ENCODE measurements at regions of chr3 and their contacts with region 1.

Region 1: GRCh38 chr3:16290007-16290826 is 25.2 kb downstream of the OXNAD1 start:
- DNase-seq: peak; percentile 89
- H3K4me3 Mint-ChIP-seq: peak overlapping the region; percentile 93
- H3K27ac Mint-ChIP-seq: peak overlapping the region; percentile 92
- H3K4me1 Mint-ChIP-seq: peaks cover 66% of the 10 kb centered on the region
- H3K27me3 Mint-ChIP-seq: no peaks in the 10 kb centered on the region

Region 2: DNA sequence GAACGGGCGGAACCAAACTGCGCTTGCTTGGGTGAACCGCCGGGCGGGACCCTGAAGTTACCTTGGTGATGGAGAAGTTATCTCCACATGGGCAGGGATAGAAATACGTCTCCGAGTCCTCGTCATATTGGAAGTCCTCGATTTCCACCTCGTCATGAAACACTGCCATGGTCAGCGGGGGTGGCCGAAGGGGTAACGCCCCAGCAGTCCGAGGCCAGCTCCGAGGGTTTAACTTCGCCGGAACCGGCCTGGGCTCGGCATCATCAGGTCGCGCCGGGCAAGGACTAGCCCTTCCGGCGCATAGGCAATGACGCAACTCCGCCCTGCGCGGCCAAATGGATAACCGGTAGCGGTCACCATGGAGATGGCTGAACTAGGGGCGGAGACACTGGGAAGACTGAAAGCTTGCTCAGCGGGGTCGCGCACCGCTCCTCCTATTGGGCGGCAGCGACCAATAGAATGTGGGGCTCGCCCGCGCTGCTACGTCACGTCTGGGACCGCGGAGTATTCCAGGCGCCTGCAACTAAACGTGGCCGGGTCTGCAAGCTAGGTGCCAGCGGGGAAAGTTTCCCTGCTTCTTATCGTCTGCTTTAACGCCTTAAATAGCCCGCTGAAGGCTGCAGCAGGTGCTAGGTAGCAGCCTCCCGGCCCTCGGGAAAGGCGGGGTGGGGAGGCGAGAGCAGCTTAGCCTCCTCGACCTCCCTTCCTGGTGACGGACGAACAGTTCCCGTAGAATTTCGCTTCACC is 25.3 kb before region 1 on chr3 and contains the starts of genes DPH3 and OXNAD1:
- intact Hi-C with region 1: loop called (anchors 1 kb)
- DNase-seq: peak; percentile 100
- H3K4me3 Mint-ChIP-seq: peak within 1 kb of the TSS; percentile 97
- H3K27ac Mint-ChIP-seq: peak within 1 kb of the TSS; percentile 98
- H3K4me1 Mint-ChIP-seq: peaks cover 33% of the 10 kb centered on the region
- H3K27me3 Mint-ChIP-seq: no peaks in the 10 kb centered on the region
- total RNA-seq, gene DPH3: 27.6 and 30.1 TPM in 2 replicates
- total RNA-seq, gene OXNAD1: 27.1 and 29.8 TPM in 2 replicates

Region 3: DNA sequence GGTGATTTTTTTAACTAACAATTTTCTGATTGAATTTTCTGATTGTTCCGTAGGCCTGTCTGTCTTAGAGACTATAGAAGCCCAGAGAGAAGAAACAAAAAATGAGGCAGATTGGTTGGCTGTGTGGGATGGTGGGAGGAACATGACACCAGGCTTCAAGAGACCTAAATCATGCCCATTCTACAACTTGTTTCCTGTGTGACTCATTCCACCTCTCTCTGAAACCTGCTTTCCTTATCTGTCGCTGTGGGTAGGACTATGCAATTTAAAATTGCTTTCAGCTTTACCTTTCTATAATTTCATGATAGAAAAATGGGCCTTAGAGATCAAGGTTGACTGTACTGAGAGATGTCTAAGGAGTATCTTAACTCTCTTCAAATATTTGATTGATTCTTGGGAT is 19.3 kb after region 1 on chr3:
- intact Hi-C with region 1: loop called (anchors 1 kb)
- DNase-seq: peak; percentile 87
- H3K4me3 Mint-ChIP-seq: peak overlapping the region; percentile 61
- H3K27ac Mint-ChIP-seq: peak overlapping the region; percentile 89
- H3K4me1 Mint-ChIP-seq: peaks cover 80% of the 10 kb centered on the region
- H3K27me3 Mint-ChIP-seq: no peaks in the 10 kb centered on the region

Region 4: DNA sequence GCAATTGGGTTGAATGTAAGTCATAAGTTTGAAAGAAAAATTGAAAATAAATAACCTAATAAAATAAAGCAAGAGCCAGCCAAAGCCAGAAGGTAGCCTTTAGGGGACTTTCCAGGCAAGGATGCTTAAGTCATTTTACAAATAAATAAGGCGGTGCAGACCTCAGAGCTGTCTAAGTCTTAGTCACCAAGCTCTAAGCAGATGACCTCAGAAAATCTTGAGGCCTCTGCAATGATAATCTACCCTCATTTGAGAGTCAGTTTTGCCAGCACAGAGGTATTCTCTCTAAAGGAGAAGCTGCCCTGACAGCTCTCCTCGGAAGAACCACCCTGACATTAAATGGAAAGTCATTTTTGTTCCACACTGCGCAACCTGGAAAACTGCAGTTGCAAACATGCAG is 88.7 kb after region 1 on chr3:
- intact Hi-C with region 1: loop called (anchors 2 kb)
- DNase-seq: peak; percentile 72
- H3K4me3 Mint-ChIP-seq: peak overlapping the region; percentile 49
- H3K27ac Mint-ChIP-seq: peak overlapping the region; percentile 90
- H3K4me1 Mint-ChIP-seq: peaks cover 67% of the 10 kb centered on the region
- H3K27me3 Mint-ChIP-seq: no peaks in the 10 kb centered on the region

Region 5: DNA sequence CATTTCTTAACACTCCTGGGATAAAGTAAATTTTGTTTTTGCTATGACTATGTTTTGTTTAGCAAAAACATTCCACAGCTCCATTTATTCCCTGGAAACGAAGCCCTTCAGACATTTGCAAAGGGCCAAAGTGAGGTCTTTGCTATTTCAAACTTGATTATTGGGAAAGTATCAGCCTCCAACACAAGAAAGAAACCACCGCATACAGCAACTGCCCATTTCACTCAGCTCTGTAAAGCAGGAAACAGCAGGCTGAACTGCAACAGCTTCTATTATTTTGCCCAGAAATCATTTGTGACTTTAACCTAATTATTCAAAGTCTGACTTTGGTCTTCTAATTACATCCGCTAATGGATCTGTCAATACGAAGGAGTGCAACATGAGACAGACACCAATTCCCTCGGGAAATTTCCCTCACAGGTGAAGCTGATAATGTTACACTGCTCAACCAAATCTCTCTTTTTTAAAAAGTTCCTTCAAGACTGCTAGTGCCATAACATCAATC is 151.2 kb after region 1 on chr3:
- intact Hi-C with region 1: no loop called
- DNase-seq: no peak
- H3K4me3 Mint-ChIP-seq: no peak overlapping the region
- H3K27ac Mint-ChIP-seq: no peak overlapping the region
- H3K4me1 Mint-ChIP-seq: peaks cover 27% of the 10 kb centered on the region
- H3K27me3 Mint-ChIP-seq: no peaks in the 10 kb centered on the region

Region 6: GRCh38 chr3:16550676-16551341 is 260.6 kb after region 1 on chr3:
- intact Hi-C with region 1: loop called (anchors 1 kb)
- DNase-seq: peak; percentile 94
- H3K4me3 Mint-ChIP-seq: no peak overlapping the region
- H3K27ac Mint-ChIP-seq: peak overlapping the region; percentile 71
- H3K4me1 Mint-ChIP-seq: peaks cover 11% of the 10 kb centered on the region
- H3K27me3 Mint-ChIP-seq: peaks cover 13% of the 10 kb centered on the region

Region 7: GRCh38 chr3:16993227-16993626 is 703.0 kb after region 1 on chr3:
- intact Hi-C with region 1: no loop called
- DNase-seq: no peak
- H3K4me3 Mint-ChIP-seq: no peak overlapping the region
- H3K27ac Mint-ChIP-seq: no peak overlapping the region
- H3K4me1 Mint-ChIP-seq: peaks cover 20% of the 10 kb centered on the region
- H3K27me3 Mint-ChIP-seq: no peaks in the 10 kb centered on the region

Region 8: DNA sequence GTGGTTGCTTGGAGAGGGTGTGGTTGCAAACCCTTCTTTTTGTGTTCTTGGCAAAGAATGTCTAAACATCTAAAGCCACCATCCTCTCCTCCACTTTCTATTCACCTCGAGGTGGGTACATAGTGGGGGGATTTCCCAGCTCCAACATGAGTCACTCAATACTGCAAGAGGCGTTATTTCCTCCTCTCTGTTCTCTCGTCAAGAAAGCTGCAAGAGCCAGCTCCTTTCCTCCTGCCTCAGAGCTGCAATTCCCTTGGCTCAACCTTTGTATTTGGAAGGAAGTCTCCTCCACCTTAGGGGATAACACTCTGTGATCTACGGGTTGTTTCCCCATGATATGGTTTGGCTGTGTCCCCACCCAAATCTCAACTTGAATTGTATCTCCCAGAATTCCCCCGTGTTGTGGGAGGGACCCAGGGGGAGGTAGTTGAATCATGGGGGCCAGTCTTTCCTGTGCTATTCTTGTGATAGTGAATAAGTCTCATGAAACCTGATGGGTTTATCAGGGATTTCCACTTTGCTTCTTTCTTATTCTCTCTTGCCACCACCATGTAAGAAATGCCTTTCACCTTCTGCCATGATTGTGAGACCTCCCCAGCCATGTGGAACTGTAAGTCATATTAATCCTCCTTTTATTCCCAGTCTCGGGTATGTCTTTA is 732.9 kb after region 1 on chr3:
- intact Hi-C with region 1: loop called (anchors 10 kb)
- DNase-seq: peak; percentile 87
- H3K4me3 Mint-ChIP-seq: peak overlapping the region; percentile 61
- H3K27ac Mint-ChIP-seq: peak overlapping the region; percentile 88
- H3K4me1 Mint-ChIP-seq: peaks cover 52% of the 10 kb centered on the region
- H3K27me3 Mint-ChIP-seq: no peaks in the 10 kb centered on the region